Naive thymus-derived CD4-positive, alpha-beta T cell (primary cell): ENCODE measurements at regions of chr9 and their contacts with region 1.

Region 1: GRCh38 chr9:75200892-75201470 is 112.7 kb downstream of the OSTF1 start:
- DNase-seq: peak in 7 of 9 donors; percentile 11 to 54 (median 50)
- ATAC-seq: peak; percentile 63
- H3K4me3 ChIP-seq: no peak overlapping the region
- H3K4me3 Mint-ChIP-seq: no peak overlapping the region
- H3K27ac ChIP-seq: no peak overlapping the region
- H3K27ac Mint-ChIP-seq: peak overlapping the region in 1 of 9 donors; percentile 0
- H3K4me1 ChIP-seq: no peaks in the 10 kb centered on the region
- H3K4me1 Mint-ChIP-seq: peaks cover 0 to 10% (median 3%) of the 10 kb centered on the region in 7 donors
- H3K27me3 ChIP-seq: no peaks in the 10 kb centered on the region
- H3K27me3 Mint-ChIP-seq: no peaks in the 10 kb centered on the region

Region 2: DNA sequence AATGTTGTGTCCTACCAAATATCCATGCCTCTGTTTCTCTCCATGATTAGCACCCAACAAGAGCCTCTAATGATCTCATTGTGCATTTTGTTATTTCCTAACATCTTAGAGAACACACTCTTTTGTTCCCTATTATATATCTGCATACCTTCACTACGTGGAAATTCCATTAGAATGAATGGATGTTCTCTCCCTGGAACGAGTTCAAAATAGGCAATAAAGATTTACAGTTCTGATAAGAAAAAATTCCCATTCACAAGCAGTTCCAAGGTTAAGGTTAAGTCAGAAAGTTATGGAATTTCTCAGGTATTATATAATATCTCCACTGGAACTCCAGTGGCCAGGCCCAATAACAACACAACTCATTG is 397.0 kb before region 1 on chr9:
- CTCF ChIA-PET with region 1: no interaction called
- POLR2A ChIA-PET with region 1: no interaction called
- intact Hi-C with region 1: no loop called
- DNase-seq: no peak
- ATAC-seq: no peak
- H3K4me3 ChIP-seq: no peak overlapping the region
- H3K4me3 Mint-ChIP-seq: no peak overlapping the region
- H3K27ac ChIP-seq: no peak overlapping the region
- H3K27ac Mint-ChIP-seq: no peak overlapping the region
- H3K4me1 ChIP-seq: no peaks in the 10 kb centered on the region
- H3K4me1 Mint-ChIP-seq: no peaks in the 10 kb centered on the region
- H3K27me3 ChIP-seq: peaks cover 0 to 3% of the 10 kb centered on the region in 2 donors
- H3K27me3 Mint-ChIP-seq: peaks cover 17 to 47% (median 26%) of the 10 kb centered on the region in 5 donors

Region 3: DNA sequence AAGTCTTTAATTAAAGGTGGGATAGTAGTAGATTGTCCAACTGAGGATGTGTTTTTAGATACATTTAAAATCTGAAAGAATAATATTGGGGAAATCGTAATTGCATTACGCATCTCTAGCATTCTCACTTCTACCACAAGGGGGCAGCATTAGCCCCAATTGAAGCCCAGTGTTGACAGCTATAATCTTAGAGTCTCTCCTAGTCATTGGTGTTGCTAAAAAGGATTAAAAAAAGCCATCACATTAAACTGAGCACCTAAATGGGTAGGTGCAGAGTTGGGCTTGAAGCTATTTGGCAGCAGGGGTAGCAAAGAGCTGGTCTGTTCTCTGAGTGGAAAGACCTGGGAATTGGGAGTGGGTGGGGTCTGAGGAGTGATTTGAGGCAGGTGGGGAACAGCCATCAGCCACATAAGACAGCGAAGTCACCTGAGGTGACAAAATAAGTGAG is 64.6 kb after region 1 on chr9:
- CTCF ChIA-PET with region 1: no interaction called
- POLR2A ChIA-PET with region 1: no interaction called
- intact Hi-C with region 1: loop called in 1 of 2 experiments (anchors 1 kb)
- DNase-seq: peak in 8 of 9 donors; percentile 13 to 65 (median 42)
- ATAC-seq: peak; percentile 70
- H3K4me3 ChIP-seq: no peak overlapping the region
- H3K4me3 Mint-ChIP-seq: peak overlapping the region in 1 of 10 donors; percentile 14
- H3K27ac ChIP-seq: no peak overlapping the region
- H3K27ac Mint-ChIP-seq: no peak overlapping the region
- H3K4me1 ChIP-seq: no peaks in the 10 kb centered on the region
- H3K4me1 Mint-ChIP-seq: no peaks in the 10 kb centered on the region
- H3K27me3 ChIP-seq: no peaks in the 10 kb centered on the region
- H3K27me3 Mint-ChIP-seq: no peaks in the 10 kb centered on the region

Region 4: DNA sequence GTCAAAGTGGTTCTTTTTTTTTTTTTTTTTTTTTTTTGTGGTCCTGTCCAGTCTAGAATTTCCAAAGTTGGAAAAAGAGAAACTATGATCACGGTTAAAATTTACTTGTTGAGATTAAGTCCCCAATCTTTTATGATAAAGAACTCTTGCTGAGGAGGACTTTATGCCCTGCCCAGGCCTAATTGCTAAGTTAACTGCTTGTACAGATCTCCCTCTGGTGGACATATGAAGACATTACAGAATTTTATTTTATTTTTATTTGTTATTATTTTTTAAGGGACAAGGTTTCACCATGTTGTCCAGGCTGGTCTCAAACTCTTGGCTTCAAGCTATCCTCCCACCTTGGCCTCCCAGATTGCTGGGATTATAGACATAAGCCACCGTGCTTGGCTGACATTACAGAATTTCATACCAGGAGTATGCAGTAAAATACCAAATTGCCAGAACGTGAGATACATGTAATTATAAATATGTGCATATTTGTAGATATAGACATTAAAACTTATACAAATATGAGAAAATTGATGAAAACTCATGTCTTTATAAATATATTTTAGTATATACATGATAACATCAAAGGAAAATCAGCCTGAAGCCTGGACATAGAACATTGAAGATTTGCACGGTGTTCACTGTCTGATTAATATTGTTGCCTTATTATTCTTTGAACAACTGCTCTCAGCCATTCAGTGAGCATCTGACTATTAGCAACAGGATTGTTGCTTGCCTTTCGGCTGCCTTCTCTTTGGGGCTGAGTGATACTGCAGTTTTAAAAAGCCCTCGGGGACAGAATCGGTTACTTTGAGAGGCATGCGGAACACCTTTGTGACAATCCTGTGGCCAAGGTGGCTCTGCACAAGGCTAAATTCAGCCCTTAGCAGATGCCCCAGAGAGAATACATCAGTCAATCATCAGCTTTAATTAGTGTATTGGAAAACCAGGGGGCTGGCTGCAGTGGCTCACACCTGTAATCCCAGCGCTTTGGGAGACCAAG is 1102.3 kb after region 1 on chr9:
- CTCF ChIA-PET with region 1: no interaction called
- POLR2A ChIA-PET with region 1: no interaction called
- intact Hi-C with region 1: loop called (anchors 2 to 5 kb)
- DNase-seq: peak in 6 of 9 donors; percentile 28 to 60 (median 54)
- ATAC-seq: peak; percentile 75
- H3K4me3 ChIP-seq: no peak overlapping the region
- H3K4me3 Mint-ChIP-seq: no peak overlapping the region
- H3K27ac ChIP-seq: no peak overlapping the region
- H3K27ac Mint-ChIP-seq: no peak overlapping the region
- H3K4me1 ChIP-seq: no peaks in the 10 kb centered on the region
- H3K4me1 Mint-ChIP-seq: peaks cover 0 to 3% (median 0%) of the 10 kb centered on the region in 7 donors
- H3K27me3 ChIP-seq: no peaks in the 10 kb centered on the region
- H3K27me3 Mint-ChIP-seq: peaks cover 0 to 17% (median 7%) of the 10 kb centered on the region in 5 donors

Region 5: GRCh38 chr9:77011973-77012821 is 1811.2 kb after region 1 on chr9:
- CTCF ChIA-PET with region 1: no interaction called
- POLR2A ChIA-PET with region 1: no interaction called
- intact Hi-C with region 1: loop called in 1 of 2 experiments (anchors 10 kb)
- DNase-seq: peak; percentile 13 to 66 (median 38)
- ATAC-seq: peak; percentile 77
- H3K4me3 ChIP-seq: no peak overlapping the region
- H3K4me3 Mint-ChIP-seq: peak overlapping the region in 9 of 10 donors; percentile 12 to 61 (median 28)
- H3K27ac ChIP-seq: no peak overlapping the region
- H3K27ac Mint-ChIP-seq: peak overlapping the region in 1 of 9 donors; percentile 24
- H3K4me1 ChIP-seq: no peaks in the 10 kb centered on the region
- H3K4me1 Mint-ChIP-seq: peaks cover 4 to 24% (median 8%) of the 10 kb centered on the region in 7 donors
- H3K27me3 ChIP-seq: peaks cover 0 to 7% of the 10 kb centered on the region in 2 donors
- H3K27me3 Mint-ChIP-seq: peaks cover 63 to 78% (median 70%) of the 10 kb centered on the region in 5 donors